ENCODE measurements at regions of chr6 and their contacts with region 1.

Region 1: GRCh38 chr6:153618805-153619215 is 420.2 kb upstream of the OPRM1 start:
- DNase-seq: no peak
- ATAC-seq: no peak
- H3K4me3 ChIP-seq: no peak overlapping the region
- H3K27ac ChIP-seq: no peak overlapping the region
- H3K4me1 ChIP-seq: peaks cover 0 to 2% of the 10 kb centered on the region in 2 donors
- H3K27me3 ChIP-seq: no peaks in the 10 kb centered on the region

Region 2: GRCh38 chr6:153787341-153787606 is 168.5 kb after region 1 on chr6:
- intact Hi-C with region 1: loop called in 1 of 2 experiments (anchors 10 kb)
- DNase-seq: no peak
- ATAC-seq: no peak
- H3K4me3 ChIP-seq: no peak overlapping the region
- H3K27ac ChIP-seq: no peak overlapping the region
- H3K4me1 ChIP-seq: peaks cover 2 to 3% of the 10 kb centered on the region in 2 donors
- H3K27me3 ChIP-seq: no peaks in the 10 kb centered on the region

Measured in aorta (tissue), 5 donors.